ENCODE measurements at regions of chr1 and their contacts with region 1.

Region 1: DNA sequence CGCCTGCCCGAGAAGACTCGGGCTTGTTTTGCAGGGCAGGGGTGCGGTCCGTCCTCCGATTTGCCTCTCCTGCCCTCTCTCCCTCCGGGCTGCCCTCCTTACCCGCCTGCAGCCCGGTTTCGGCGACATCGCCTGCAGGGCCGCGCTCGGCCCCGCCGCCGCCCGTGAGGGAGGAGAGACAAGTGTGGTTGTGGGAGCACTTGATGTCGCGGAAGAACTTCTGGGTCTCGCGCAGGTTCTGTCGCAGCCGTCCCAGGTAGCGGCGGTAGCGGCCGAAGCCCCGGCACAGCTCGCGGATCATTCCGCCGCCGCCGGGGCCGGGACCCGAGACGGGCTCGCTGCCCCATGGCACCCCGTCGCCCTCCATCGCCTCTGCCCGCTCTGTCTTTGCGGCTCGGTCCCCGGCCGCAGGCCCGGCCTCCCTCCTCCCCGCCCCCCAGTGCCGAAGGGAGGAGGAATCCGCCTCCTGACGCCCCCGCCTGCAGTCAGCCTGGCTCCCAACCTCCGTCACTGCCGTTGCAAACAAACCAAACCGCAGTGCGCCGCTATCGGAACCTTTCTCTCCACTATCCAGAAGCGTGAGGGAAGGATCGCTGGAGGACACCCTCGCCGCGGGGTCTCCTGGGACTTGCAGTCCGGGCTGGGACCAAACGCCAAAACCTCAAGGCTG is at the start of gene DSTYK:
- DNase-seq: peak; percentile 95
- ATAC-seq: peak; percentile 91
- H3K4me3 Mint-ChIP-seq: peak within 1 kb of the TSS; percentile 90
- H3K27ac Mint-ChIP-seq: peak within 1 kb of the TSS; percentile 86
- H3K4me1 Mint-ChIP-seq: peaks cover 42% of the 10 kb centered on the region
- H3K27me3 Mint-ChIP-seq: no peaks in the 10 kb centered on the region
- CTCF ChIP-seq: no peak
- total RNA-seq, gene DSTYK: 10.0 to 10.7 TPM

Region 2: GRCh38 chr1:205032508-205032907 is 178.8 kb before region 1 on chr1:
- CTCF ChIA-PET with region 1: no interaction called
- POLR2A ChIA-PET with region 1: no interaction called
- intact Hi-C with region 1: no loop called
- DNase-seq: no peak
- ATAC-seq: no peak
- H3K4me3 Mint-ChIP-seq: no peak overlapping the region
- H3K27ac Mint-ChIP-seq: no peak overlapping the region
- H3K4me1 Mint-ChIP-seq: no peaks in the 10 kb centered on the region
- H3K27me3 Mint-ChIP-seq: no peaks in the 10 kb centered on the region
- CTCF ChIP-seq: no peak

Region 3: GRCh38 chr1:205199090-205199930 is 12.0 kb before region 1 on chr1:
- CTCF ChIA-PET with region 1: interaction called, 10 read pairs
- POLR2A ChIA-PET with region 1: interaction called, 13 read pairs
- intact Hi-C with region 1: no loop called
- DNase-seq: peak; percentile 70
- ATAC-seq: peak; percentile 55
- H3K4me3 Mint-ChIP-seq: peak overlapping the region; percentile 53
- H3K27ac Mint-ChIP-seq: peak overlapping the region; percentile 94
- H3K4me1 Mint-ChIP-seq: peaks cover 69% of the 10 kb centered on the region
- H3K27me3 Mint-ChIP-seq: no peaks in the 10 kb centered on the region
- CTCF ChIP-seq: no peak

Region 4: DNA sequence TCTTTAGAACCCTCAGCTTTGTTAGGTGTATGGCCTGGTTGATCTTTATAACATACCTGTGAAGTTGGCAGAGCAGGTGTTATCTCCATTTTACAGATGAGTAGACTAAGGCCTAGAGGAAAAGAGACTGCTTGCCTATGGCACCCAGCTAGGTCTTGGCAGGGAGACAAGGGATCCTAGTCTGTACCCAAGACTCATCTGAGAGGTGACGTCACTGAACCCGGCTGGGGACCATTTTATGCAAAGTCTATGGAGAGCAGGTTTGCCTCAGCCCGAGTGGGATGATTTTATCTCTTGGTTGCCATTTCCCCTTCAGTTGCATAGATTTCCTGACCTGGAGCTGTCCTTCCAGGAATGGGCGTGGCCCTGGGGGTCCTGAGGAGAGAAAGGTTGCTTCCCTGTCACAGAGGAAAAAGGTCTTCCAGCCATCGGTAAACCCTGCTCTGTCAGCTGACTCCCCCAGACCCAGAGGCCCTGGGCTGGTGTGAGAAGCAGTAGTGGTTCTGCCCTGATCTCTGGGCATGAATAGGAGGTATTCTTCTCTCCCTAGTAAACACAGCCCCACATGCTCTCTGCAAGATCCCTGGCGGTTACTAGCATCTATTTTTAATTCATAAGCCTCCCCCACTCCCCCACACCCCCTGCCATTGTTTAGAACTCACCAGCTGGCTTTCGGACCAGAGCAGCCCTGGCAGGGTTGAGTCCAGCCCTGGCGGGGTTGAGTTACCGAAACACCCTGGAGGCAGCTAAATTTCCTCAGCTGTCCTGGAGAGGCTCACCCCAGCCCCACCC is 36.0 kb after region 1 on chr1:
- CTCF ChIA-PET with region 1: no interaction called
- POLR2A ChIA-PET with region 1: no interaction called
- intact Hi-C with region 1: no loop called
- DNase-seq: peak; percentile 37
- ATAC-seq: peak; percentile 48
- H3K4me3 Mint-ChIP-seq: no peak overlapping the region
- H3K27ac Mint-ChIP-seq: no peak overlapping the region
- H3K4me1 Mint-ChIP-seq: peaks cover 6% of the 10 kb centered on the region
- H3K27me3 Mint-ChIP-seq: no peaks in the 10 kb centered on the region
- CTCF ChIP-seq: no peak

Measured in activated CD8-positive, alpha-beta T cell treated with anti-CD3 and anti-CD28 coated beads for 36 hours (primary cell).